CD4-positive, alpha-beta memory T cell (primary cell): ENCODE measurements at regions of chr7 and their contacts with region 1.

Region 1: DNA sequence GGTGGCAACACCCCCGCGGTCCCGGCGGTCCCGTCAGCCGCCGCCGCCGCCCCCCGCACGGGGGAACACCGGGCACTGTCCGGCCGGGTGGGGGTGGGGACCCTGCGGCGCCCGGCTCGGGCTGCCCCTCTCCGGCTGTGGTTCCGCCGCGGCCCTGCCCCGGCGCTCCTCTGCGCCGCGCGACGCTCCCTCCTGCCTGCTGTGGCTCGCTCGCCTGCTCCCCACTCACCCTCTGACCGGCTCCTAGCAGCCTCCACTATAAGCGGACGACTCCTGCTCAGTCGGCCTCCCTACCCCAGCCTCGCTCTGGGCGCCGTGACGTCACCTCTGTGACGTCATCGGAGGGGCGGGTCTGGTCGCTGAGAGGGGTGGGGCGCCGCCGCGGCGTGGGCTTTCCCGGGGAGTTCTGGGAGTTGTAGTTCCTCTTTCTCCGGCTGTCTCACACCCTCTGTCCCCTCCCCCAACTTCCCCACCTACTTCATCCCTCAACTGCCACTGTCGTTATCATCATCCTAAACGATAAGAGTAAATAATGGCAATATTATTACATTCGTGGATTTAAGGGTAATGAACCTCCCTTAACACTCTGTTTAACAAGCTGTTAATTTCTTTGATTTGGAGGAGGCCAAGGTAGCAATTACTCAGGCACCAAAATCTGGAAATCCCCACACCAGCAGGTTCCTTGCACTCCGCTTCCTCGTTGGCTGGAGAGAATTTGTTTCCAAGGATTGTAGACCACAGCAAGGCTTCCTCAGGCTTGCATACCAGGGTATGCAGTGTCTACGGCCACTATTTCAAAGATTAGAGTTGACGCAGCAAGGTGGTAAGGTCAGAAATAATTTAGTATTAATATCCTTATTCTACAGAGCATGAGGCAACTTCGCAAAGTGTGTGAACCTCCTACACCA is at the start of gene UBE2H:
- DNase-seq: peak; percentile 83 to 89 (median 86)
- H3K4me3 ChIP-seq: peak within 1 kb of the TSS; percentile 53 to 85
- H3K4me3 Mint-ChIP-seq: peak within 1 kb of the TSS; percentile 95 to 100 (median 99)
- H3K27ac ChIP-seq: peak within 1 kb of the TSS; percentile 96
- H3K27ac Mint-ChIP-seq: peak within 1 kb of the TSS in 6 of 7 donors; percentile 94 to 100 (median 100)
- H3K4me1 ChIP-seq: peaks cover 42% of the 10 kb centered on the region
- H3K4me1 Mint-ChIP-seq: peaks cover 5 to 16% (median 7%) of the 10 kb centered on the region in 4 donors
- H3K27me3 ChIP-seq: no peaks in the 10 kb centered on the region
- H3K27me3 Mint-ChIP-seq: peaks cover 0 to 2% of the 10 kb centered on the region in 2 donors
- total RNA-seq, gene UBE2H: 42.6 to 43.8 TPM

Region 2: GRCh38 chr7:129906700-129907099 is 46.2 kb before region 1 on chr7:
- CTCF ChIA-PET with region 1: interaction called, 3 read pairs
- POLR2A ChIA-PET with region 1: interaction called, 7 read pairs
- intact Hi-C with region 1: loop called (anchors 1 kb)
- DNase-seq: peak; percentile 23 to 54 (median 43)
- H3K4me3 ChIP-seq: peak overlapping the region in 1 of 2 donors; percentile 28
- H3K4me3 Mint-ChIP-seq: peak overlapping the region; percentile 54 to 78 (median 65)
- H3K27ac ChIP-seq: peak overlapping the region; percentile 28
- H3K27ac Mint-ChIP-seq: peak overlapping the region; percentile 77 to 94 (median 88)
- H3K4me1 ChIP-seq: peaks cover 77% of the 10 kb centered on the region
- H3K4me1 Mint-ChIP-seq: peaks cover 67 to 98% (median 83%) of the 10 kb centered on the region in 4 donors
- H3K27me3 ChIP-seq: no peaks in the 10 kb centered on the region
- H3K27me3 Mint-ChIP-seq: no peaks in the 10 kb centered on the region